ENCODE measurements at regions of chr4 and their contacts with region 1.

Region 1: GRCh38 chr4:24584175-24584850 is at the start of gene DHX15:
- DNase-seq: peak; percentile 97
- H3K4me3 Mint-ChIP-seq: peak within 1 kb of the TSS; percentile 95
- H3K27ac Mint-ChIP-seq: peak within 1 kb of the TSS; percentile 97
- H3K4me1 Mint-ChIP-seq: peaks cover 30% of the 10 kb centered on the region
- H3K27me3 Mint-ChIP-seq: no peaks in the 10 kb centered on the region
- total RNA-seq, gene DHX15: 263 and 265 TPM in 2 replicates

Region 2: GRCh38 chr4:24472514-24473308 is 111.6 kb before region 1 on chr4:
- intact Hi-C with region 1: loop called (anchors 2 kb)
- DNase-seq: peak; percentile 86
- H3K4me3 Mint-ChIP-seq: peak overlapping the region; percentile 90
- H3K27ac Mint-ChIP-seq: peak overlapping the region; percentile 79
- H3K4me1 Mint-ChIP-seq: peaks cover 28% of the 10 kb centered on the region
- H3K27me3 Mint-ChIP-seq: peaks cover 71% of the 10 kb centered on the region

Region 3: GRCh38 chr4:24544208-24544988 is 39.9 kb before region 1 on chr4:
- intact Hi-C with region 1: loop called (anchors 5 kb)
- DNase-seq: no peak
- H3K4me3 Mint-ChIP-seq: no peak overlapping the region
- H3K27ac Mint-ChIP-seq: no peak overlapping the region
- H3K4me1 Mint-ChIP-seq: peaks cover 40% of the 10 kb centered on the region
- H3K27me3 Mint-ChIP-seq: no peaks in the 10 kb centered on the region

Region 4: GRCh38 chr4:24630937-24631336 is 46.6 kb after region 1 on chr4:
- intact Hi-C with region 1: no loop called
- DNase-seq: no peak
- H3K4me3 Mint-ChIP-seq: no peak overlapping the region
- H3K27ac Mint-ChIP-seq: no peak overlapping the region
- H3K4me1 Mint-ChIP-seq: no peaks in the 10 kb centered on the region
- H3K27me3 Mint-ChIP-seq: peaks cover 5% of the 10 kb centered on the region

Region 5: GRCh38 chr4:24781999-24782745 is 197.9 kb after region 1 on chr4:
- intact Hi-C with region 1: no loop called
- DNase-seq: no peak
- H3K4me3 Mint-ChIP-seq: no peak overlapping the region
- H3K27ac Mint-ChIP-seq: no peak overlapping the region
- H3K4me1 Mint-ChIP-seq: no peaks in the 10 kb centered on the region
- H3K27me3 Mint-ChIP-seq: no peaks in the 10 kb centered on the region

Region 6: GRCh38 chr4:25234390-25235370 is 650.4 kb after region 1 on chr4:
- intact Hi-C with region 1: loop called (anchors 5 kb)
- DNase-seq: peak; percentile 83
- H3K4me3 Mint-ChIP-seq: peak overlapping the region; percentile 86
- H3K27ac Mint-ChIP-seq: peak overlapping the region; percentile 93
- H3K4me1 Mint-ChIP-seq: peaks cover 21% of the 10 kb centered on the region
- H3K27me3 Mint-ChIP-seq: no peaks in the 10 kb centered on the region

Region 7: DNA sequence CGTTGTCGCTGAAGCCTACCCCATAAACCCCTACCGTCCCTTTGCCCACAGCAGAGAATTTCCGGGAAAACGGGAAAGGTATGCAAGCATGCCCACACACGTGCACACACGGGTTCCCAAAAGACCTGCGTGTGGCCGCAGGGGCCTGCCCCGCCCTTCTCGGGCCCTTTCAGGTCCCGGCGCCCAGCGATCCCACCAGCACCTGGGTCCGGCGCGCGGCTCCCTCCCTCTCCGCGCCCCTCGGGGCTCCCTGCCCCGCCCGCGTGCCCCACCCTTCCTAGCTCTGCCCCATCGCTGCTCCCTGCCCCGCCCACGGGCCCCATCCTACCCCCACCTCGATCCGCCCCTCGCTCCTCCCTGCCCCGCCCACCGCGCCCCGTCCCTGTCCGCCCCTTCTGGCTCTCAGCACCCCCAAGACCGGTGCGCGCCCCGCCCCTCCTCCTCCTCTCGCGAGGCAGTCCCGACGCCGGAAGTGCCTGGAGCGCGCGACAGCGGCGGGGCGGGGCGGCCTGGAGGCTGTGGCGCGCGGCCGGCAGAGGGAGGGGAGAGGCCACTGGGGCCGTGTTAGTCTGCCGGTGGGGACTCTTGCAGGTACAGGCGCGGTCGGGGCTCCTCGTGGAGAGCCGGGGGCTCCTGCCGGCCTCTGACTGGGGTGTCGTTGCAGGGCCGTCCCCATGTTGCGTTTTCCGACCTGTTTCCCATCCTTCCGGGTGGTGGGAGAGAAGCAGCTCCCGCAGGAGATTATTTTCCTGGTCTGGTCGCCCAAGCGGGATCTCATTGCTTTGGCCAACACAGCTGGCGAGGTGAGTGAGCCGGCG is 792.6 kb after region 1 on chr4 and contains the start of gene ANAPC4:
- intact Hi-C with region 1: loop called (anchors 5 kb)
- DNase-seq: peak; percentile 99
- H3K4me3 Mint-ChIP-seq: no peak within 1 kb of the TSS
- H3K27ac Mint-ChIP-seq: peak within 1 kb of the TSS; percentile 87
- H3K4me1 Mint-ChIP-seq: peaks cover 8% of the 10 kb centered on the region
- H3K27me3 Mint-ChIP-seq: no peaks in the 10 kb centered on the region
- total RNA-seq, gene ANAPC4: 37.4 and 42.1 TPM in 2 replicates